Mammary epithelial cell (primary cell): ENCODE measurements at regions of chr18 and their contacts with region 1.

Region 1: GRCh38 chr18:75189696-75190095 is 19.2 kb downstream of the PTGR3 start:
- DNase-seq: no peak
- H3K4me3 ChIP-seq: no peak overlapping the region
- H3K27ac ChIP-seq: no peak overlapping the region
- H3K4me1 ChIP-seq: no peaks in the 10 kb centered on the region
- H3K27me3 ChIP-seq: no peaks in the 10 kb centered on the region
- CTCF ChIP-seq: no peak

Region 2: GRCh38 chr18:75238100-75238499 is 48.4 kb after region 1 on chr18:
- CTCF ChIA-PET with region 1: no interaction called
- dilution Hi-C with region 1: loop called (anchors 5 kb)
- in situ Hi-C with region 1: no loop called
- intact Hi-C with region 1: no loop called
- DNase-seq: no peak
- H3K4me3 ChIP-seq: no peak overlapping the region
- H3K27ac ChIP-seq: no peak overlapping the region
- H3K4me1 ChIP-seq: no peaks in the 10 kb centered on the region
- H3K27me3 ChIP-seq: no peaks in the 10 kb centered on the region
- CTCF ChIP-seq: no peak